ENCODE measurements at regions of chr1 and their contacts with region 1.

Region 1: GRCh38 chr1:160646711-160647328 is at the start of gene SLAMF1:
- DNase-seq: peak in 6 of 14 experiments; percentile 22 to 78 (median 66)
- ATAC-seq: peak; percentile 77
- H3K4me3 ChIP-seq: peak within 1 kb of the TSS; percentile 69
- H3K4me3 Mint-ChIP-seq: peak within 1 kb of the TSS; percentile 97
- H3K27ac ChIP-seq: peak within 1 kb of the TSS; percentile 68 to 76
- H3K27ac Mint-ChIP-seq: peak within 1 kb of the TSS; percentile 97
- H3K4me1 ChIP-seq: peaks cover 36% of the 10 kb centered on the region
- H3K4me1 Mint-ChIP-seq: peaks cover 78% of the 10 kb centered on the region
- H3K27me3 ChIP-seq: no peaks in the 10 kb centered on the region
- H3K27me3 Mint-ChIP-seq: no peaks in the 10 kb centered on the region
- CTCF ChIP-seq: no peak
- total RNA-seq, gene SLAMF1: 39.4 to 39.8 TPM

Region 2: GRCh38 chr1:160618763-160619274 is 28.0 kb before region 1 on chr1:
- CTCF ChIA-PET with region 1: interaction called, 10 read pairs
- POLR2A ChIA-PET with region 1: interaction called, 14 read pairs
- intact Hi-C with region 1: loop called (anchors 1 to 2 kb)
- DNase-seq: peak in 8 of 14 experiments; percentile 19 to 79 (median 44)
- ATAC-seq: peak; percentile 67
- H3K4me3 ChIP-seq: no peak overlapping the region
- H3K4me3 Mint-ChIP-seq: no peak overlapping the region
- H3K27ac ChIP-seq: no peak overlapping the region
- H3K27ac Mint-ChIP-seq: peak overlapping the region; percentile 42
- H3K4me1 ChIP-seq: peaks cover 44% of the 10 kb centered on the region
- H3K4me1 Mint-ChIP-seq: peaks cover 84% of the 10 kb centered on the region
- H3K27me3 ChIP-seq: no peaks in the 10 kb centered on the region
- H3K27me3 Mint-ChIP-seq: no peaks in the 10 kb centered on the region
- CTCF ChIP-seq: peak; percentile 80

Region 3: GRCh38 chr1:160664573-160665051 is 17.8 kb after region 1 on chr1:
- CTCF ChIA-PET with region 1: interaction called, 4 read pairs
- POLR2A ChIA-PET with region 1: interaction called, 37 read pairs
- intact Hi-C with region 1: loop called in 1 of 2 experiments (anchors 2 kb)
- DNase-seq: peak in 4 of 14 experiments; percentile 53 to 84 (median 74)
- ATAC-seq: peak; percentile 83
- H3K4me3 ChIP-seq: peak overlapping the region; percentile 13
- H3K4me3 Mint-ChIP-seq: peak overlapping the region; percentile 64
- H3K27ac ChIP-seq: peak overlapping the region; percentile 37 to 79
- H3K27ac Mint-ChIP-seq: peak overlapping the region; percentile 78
- H3K4me1 ChIP-seq: peaks cover 45% of the 10 kb centered on the region
- H3K4me1 Mint-ChIP-seq: peaks cover 74% of the 10 kb centered on the region
- H3K27me3 ChIP-seq: no peaks in the 10 kb centered on the region
- H3K27me3 Mint-ChIP-seq: no peaks in the 10 kb centered on the region
- CTCF ChIP-seq: no peak

Region 4: DNA sequence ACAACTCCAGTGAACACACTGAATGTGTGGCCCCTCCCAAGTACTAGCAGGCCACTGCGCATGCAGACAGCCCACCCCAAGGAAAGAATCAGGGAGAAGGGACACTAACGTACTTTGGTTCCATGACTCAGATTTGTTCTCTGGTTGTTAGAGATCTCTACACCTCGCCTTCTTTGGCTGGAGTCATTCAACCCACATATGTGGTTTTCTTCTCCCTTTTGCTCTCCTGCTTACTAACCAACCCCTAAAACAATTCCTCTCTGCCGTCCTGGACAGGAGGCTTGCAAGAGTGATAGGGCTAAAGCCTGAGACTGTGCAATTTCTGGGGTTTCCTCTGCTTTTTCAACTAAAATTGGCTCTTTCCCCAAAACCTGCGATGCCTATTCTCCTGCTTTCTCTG is 70.5 kb after region 1 on chr1:
- CTCF ChIA-PET with region 1: no interaction called
- POLR2A ChIA-PET with region 1: interaction called, 3 read pairs
- intact Hi-C with region 1: loop called in 1 of 2 experiments (anchors 5 kb)
- DNase-seq: no peak
- ATAC-seq: no peak
- H3K4me3 ChIP-seq: no peak overlapping the region
- H3K4me3 Mint-ChIP-seq: no peak overlapping the region
- H3K27ac ChIP-seq: no peak overlapping the region
- H3K27ac Mint-ChIP-seq: no peak overlapping the region
- H3K4me1 ChIP-seq: peaks cover 23% of the 10 kb centered on the region
- H3K4me1 Mint-ChIP-seq: peaks cover 72% of the 10 kb centered on the region
- H3K27me3 ChIP-seq: no peaks in the 10 kb centered on the region
- H3K27me3 Mint-ChIP-seq: no peaks in the 10 kb centered on the region
- CTCF ChIP-seq: no peak

Region 5: DNA sequence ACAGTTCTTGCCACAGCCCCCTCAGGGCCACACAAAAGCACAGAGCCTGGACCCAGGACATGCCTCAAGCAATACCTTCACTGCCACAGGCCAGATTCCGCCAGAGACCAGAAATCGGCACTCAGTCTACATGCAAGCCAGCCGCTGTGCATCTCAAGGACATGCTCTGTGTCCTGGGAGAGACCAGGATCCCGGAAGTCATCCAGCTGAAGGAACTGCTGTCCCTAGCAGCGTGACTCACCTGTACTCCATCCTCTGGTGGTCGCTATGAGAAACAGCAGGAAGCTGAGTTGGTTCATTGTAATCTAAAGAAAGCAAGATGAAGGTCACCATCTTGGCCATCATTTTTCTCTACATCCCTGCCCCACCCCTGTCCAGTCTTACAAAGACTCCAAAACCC is 237.8 kb after region 1 on chr1:
- CTCF ChIA-PET with region 1: no interaction called
- POLR2A ChIA-PET with region 1: no interaction called
- intact Hi-C with region 1: no loop called
- DNase-seq: peak in 1 of 14 experiments; percentile 72
- ATAC-seq: peak; percentile 78
- H3K4me3 ChIP-seq: no peak overlapping the region
- H3K4me3 Mint-ChIP-seq: no peak overlapping the region
- H3K27ac ChIP-seq: no peak overlapping the region
- H3K27ac Mint-ChIP-seq: no peak overlapping the region
- H3K4me1 ChIP-seq: peaks cover 9% of the 10 kb centered on the region
- H3K4me1 Mint-ChIP-seq: peaks cover 5% of the 10 kb centered on the region
- H3K27me3 ChIP-seq: peaks cover 0 to 4% of the 10 kb centered on the region in 2 experiments
- H3K27me3 Mint-ChIP-seq: peaks cover 4% of the 10 kb centered on the region
- CTCF ChIP-seq: peak; percentile 71

Region 6: GRCh38 chr1:161420763-161421455 is 774.1 kb after region 1 on chr1:
- CTCF ChIA-PET with region 1: no interaction called
- POLR2A ChIA-PET with region 1: no interaction called
- intact Hi-C with region 1: no loop called
- DNase-seq: no peak
- ATAC-seq: no peak
- H3K4me3 ChIP-seq: no peak overlapping the region
- H3K4me3 Mint-ChIP-seq: no peak overlapping the region
- H3K27ac ChIP-seq: no peak overlapping the region
- H3K27ac Mint-ChIP-seq: no peak overlapping the region
- H3K4me1 ChIP-seq: peaks cover 4% of the 10 kb centered on the region
- H3K4me1 Mint-ChIP-seq: peaks cover 7% of the 10 kb centered on the region
- H3K27me3 ChIP-seq: peaks cover 0 to 5% of the 10 kb centered on the region in 2 experiments
- H3K27me3 Mint-ChIP-seq: peaks cover 24% of the 10 kb centered on the region
- CTCF ChIP-seq: no peak

Measured in CD4-positive, alpha-beta T cell (primary cell).